ENCODE measurements at regions of chr5 and their contacts with region 1.

Region 1: GRCh38 chr5:64158827-64159226 is 6.8 kb upstream of the RNF180 start:
- DNase-seq: no peak
- ATAC-seq: no peak
- H3K4me3 ChIP-seq: no peak overlapping the region
- H3K27ac ChIP-seq: no peak overlapping the region
- H3K4me1 ChIP-seq: no peaks in the 10 kb centered on the region
- H3K27me3 ChIP-seq: no peaks in the 10 kb centered on the region
- CTCF ChIP-seq: no peak

Region 2: DNA sequence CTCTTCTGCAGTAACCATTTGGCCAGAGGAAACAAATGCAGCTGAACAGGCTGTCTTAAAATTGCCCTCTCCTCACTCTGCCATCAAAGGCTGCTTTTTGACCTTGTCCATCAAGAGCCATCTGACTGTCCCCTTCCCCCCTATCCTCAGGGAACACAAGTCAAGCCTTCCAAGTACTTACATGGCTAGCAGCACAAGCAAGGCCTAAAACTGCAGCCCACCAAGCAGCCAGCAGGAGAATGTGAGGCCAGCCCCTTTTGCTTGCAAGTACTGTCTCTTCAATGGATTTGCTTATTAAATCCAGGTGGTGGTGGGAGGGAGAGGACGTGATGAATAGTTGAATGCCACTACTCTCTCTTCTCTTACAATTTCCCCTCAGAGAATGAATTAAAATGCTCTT is 280.0 kb before region 1 on chr5:
- intact Hi-C with region 1: no loop called
- DNase-seq: no peak
- ATAC-seq: no peak
- H3K4me3 ChIP-seq: no peak overlapping the region
- H3K27ac ChIP-seq: no peak overlapping the region
- H3K4me1 ChIP-seq: no peaks in the 10 kb centered on the region
- H3K27me3 ChIP-seq: no peaks in the 10 kb centered on the region
- CTCF ChIP-seq: no peak

Region 3: GRCh38 chr5:64625678-64626077 is 466.9 kb after region 1 on chr5:
- intact Hi-C with region 1: loop called in 1 of 3 experiments (anchors 10 kb)
- DNase-seq: no peak
- ATAC-seq: no peak
- H3K4me3 ChIP-seq: no peak overlapping the region
- H3K27ac ChIP-seq: no peak overlapping the region
- H3K4me1 ChIP-seq: no peaks in the 10 kb centered on the region
- H3K27me3 ChIP-seq: no peaks in the 10 kb centered on the region
- CTCF ChIP-seq: no peak

Measured in pancreas (tissue), 10 donors.